ENCODE measurements at regions of chr19 and their contacts with region 1.

Region 1: DNA sequence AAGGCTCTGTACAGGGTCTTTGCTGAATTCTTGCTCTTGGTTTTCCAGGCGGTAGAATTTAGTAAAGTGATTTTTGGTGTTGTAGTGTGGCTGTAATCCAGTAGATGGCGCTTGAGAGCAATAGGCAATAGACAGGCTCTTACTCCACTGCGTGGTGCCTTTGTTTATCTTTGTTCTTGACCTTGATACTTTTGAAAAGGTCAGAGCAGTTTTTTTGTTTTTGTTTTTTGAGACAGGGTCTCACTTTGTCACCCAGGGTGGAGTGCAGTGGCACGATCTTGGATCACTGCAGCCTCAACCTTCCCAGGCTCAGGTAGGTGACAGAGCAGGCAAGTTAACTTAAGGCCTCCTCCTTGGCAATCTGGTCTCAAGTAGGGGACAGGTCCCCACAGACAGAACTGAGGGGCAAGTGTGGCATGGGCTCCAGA is 12.2 kb upstream of the LILRA5 start:
- DNase-seq: peak; percentile 10 to 76 (median 53)
- ATAC-seq: peak; percentile 83
- H3K4me3 ChIP-seq: no peak overlapping the region
- H3K4me3 Mint-ChIP-seq: no peak overlapping the region
- H3K27ac ChIP-seq: no peak overlapping the region
- H3K27ac Mint-ChIP-seq: no peak overlapping the region
- H3K4me1 ChIP-seq: peaks cover 8% of the 10 kb centered on the region
- H3K4me1 Mint-ChIP-seq: peaks cover 15% of the 10 kb centered on the region
- H3K27me3 ChIP-seq: no peaks in the 10 kb centered on the region
- H3K27me3 Mint-ChIP-seq: peaks cover 6% of the 10 kb centered on the region
- CTCF ChIP-seq: peak; percentile 94

Region 2: DNA sequence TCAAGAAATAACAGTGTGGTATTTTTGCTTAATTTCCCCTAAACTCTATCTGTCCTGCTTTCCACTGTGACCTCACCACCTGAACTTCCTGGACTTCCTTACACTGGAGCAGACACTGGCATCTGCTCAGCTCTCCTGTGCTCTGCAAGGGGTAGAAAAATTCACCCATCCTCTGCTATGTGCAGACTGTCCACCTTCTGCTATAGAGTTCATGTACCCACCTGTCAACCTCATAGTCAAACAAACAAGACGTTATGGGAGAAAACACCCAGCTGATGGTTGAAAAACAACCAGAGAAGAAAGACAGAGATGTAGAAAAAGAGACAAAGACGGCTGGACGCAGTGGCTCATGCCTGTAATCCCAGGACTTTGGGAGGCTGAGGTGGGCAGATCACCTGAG is 27.3 kb after region 1 on chr19:
- CTCF ChIA-PET with region 1: interaction called, 8 read pairs
- POLR2A ChIA-PET with region 1: no interaction called
- intact Hi-C with region 1: loop called (anchors 1 to 2 kb)
- DNase-seq: no peak
- ATAC-seq: no peak
- H3K4me3 ChIP-seq: no peak overlapping the region
- H3K4me3 Mint-ChIP-seq: no peak overlapping the region
- H3K27ac ChIP-seq: no peak overlapping the region
- H3K27ac Mint-ChIP-seq: peak overlapping the region; percentile 78
- H3K4me1 ChIP-seq: no peaks in the 10 kb centered on the region
- H3K4me1 Mint-ChIP-seq: peaks cover 19% of the 10 kb centered on the region
- H3K27me3 ChIP-seq: no peaks in the 10 kb centered on the region
- H3K27me3 Mint-ChIP-seq: no peaks in the 10 kb centered on the region
- CTCF ChIP-seq: no peak

Measured in CD8-positive, alpha-beta T cell (primary cell).